Caco-2 (cell line): ENCODE measurements at regions of chr9 and their contacts with region 1.

Region 1: GRCh38 chr9:112711050-112711689 is 6.7 kb downstream of the INIP start:
- DNase-seq: peak in 1 of 2 experiments; percentile 18
- H3K4me3 ChIP-seq: no peak overlapping the region
- H3K4me3 Mint-ChIP-seq: no peak overlapping the region
- H3K27ac Mint-ChIP-seq: no peak overlapping the region
- H3K4me1 ChIP-seq: no peaks in the 10 kb centered on the region
- H3K4me1 Mint-ChIP-seq: peaks cover 6% of the 10 kb centered on the region
- H3K27me3 ChIP-seq: no peaks in the 10 kb centered on the region
- H3K27me3 Mint-ChIP-seq: no peaks in the 10 kb centered on the region
- CTCF ChIP-seq: peak; percentile 44 to 71

Region 2: DNA sequence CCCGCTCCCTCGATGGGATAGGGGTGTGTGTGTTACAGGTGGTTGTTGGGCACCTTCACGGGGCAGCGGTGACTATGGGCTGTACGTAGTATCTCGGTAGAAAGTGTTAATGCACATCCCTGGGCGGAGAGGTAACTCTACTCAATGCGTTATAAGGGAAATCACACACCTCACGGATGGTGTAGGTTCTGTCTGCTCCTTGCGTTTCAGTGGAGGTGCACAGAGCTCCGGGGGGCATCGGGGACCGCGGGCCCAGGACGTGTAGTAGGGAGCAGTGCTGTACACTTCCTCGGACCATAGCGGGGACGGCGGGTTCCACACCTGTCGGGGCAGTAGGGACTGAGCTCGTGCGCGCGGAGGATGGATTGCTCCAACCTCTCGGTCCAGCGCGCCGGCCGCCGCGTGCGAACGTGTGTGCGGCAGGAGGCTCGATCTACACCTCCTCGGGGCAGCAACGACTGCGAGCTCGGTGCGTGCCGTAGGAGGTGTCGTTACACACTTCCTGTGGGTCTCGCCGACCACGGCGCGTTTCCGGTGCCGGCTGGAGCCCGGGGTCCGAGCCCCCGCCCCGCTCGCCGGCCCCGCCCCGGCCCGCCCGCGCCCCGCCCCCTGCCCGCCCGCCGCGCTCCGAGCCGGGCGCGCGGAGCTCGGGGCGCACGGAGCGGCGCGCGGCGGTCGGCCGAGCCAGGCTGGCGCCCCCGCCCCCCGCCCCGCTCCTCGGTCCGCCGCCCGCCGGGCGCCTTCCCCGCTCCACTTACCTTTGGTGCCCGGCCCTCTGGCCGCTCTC is 224.8 kb before region 1 on chr9 and contains the start of gene KIAA1958:
- CTCF ChIA-PET with region 1: no interaction called
- POLR2A ChIA-PET with region 1: no interaction called
- intact Hi-C with region 1: loop called (anchors 2 kb)
- DNase-seq: peak; percentile 88 to 93
- H3K4me3 ChIP-seq: peak within 1 kb of the TSS; percentile 66
- H3K4me3 Mint-ChIP-seq: peak within 1 kb of the TSS; percentile 99
- H3K27ac Mint-ChIP-seq: peak within 1 kb of the TSS; percentile 98
- H3K4me1 ChIP-seq: peaks cover 25% of the 10 kb centered on the region
- H3K4me1 Mint-ChIP-seq: peaks cover 33% of the 10 kb centered on the region
- H3K27me3 ChIP-seq: no peaks in the 10 kb centered on the region
- H3K27me3 Mint-ChIP-seq: no peaks in the 10 kb centered on the region
- CTCF ChIP-seq: no peak
- total RNA-seq, gene KIAA1958: 20.0 and 22.7 TPM in 2 replicates